Gastrocnemius medialis (tissue), 4 donors: ENCODE measurements at regions of chr1 and their contacts with region 1.

Region 1: DNA sequence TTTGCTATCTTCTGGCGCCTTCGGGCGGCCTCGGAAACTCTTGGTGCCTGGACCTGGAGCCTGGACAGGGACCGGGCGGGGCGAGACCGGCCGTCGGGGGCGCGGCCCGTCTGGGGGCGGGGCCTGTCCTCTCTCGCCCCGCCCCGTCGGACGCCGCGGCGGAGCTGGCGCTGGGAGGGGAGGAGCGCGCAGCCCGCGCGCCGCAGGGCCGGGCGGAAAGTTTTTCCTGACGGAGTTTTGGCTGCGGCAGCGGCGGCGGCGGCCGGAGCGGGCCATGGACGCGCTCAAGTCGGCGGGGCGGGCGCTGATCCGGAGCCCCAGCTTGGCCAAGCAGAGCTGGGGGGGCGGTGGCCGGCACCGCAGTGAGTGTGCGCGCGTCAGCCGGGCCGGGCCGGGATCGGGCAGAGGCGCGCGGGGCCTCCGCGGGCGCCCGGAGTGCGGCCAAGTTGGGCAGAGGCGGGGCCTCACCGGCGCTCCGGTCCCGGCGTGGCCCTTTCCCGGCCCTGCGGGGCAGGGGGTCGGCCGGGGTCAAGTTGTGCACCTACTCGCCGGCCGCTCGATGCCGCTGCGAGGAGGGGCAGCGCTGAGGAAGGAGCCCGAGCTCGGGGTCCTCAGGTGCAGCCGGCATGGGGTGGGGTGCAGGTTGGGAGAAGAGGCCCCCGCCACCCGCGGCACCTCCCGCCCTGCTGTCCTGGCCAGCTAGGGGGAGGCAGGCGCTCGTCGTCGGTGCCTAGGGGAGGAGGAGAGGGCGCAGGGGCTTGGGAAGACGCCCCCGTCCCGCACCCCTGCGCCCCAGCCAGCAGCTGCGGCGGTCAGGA is at the start of gene LDLRAP1:
- DNase-seq: peak; percentile 48 to 68
- ATAC-seq: peak; percentile 88
- H3K4me3 ChIP-seq: peak within 1 kb of the TSS; percentile 76 to 95 (median 89)
- H3K27ac ChIP-seq: peak within 1 kb of the TSS; percentile 82 to 97 (median 93)
- H3K4me1 ChIP-seq: peaks cover 25 to 29% of the 10 kb centered on the region in 2 donors
- H3K27me3 ChIP-seq: no peaks in the 10 kb centered on the region
- CTCF ChIP-seq: no peak
- POLR2A ChIP-seq: peak; percentile 98 to 99
- total RNA-seq, gene LDLRAP1: 10.0 to 17.9 (median 14.2) TPM

Region 2: GRCh38 chr1:25503551-25504426 is 39.8 kb before region 1 on chr1:
- in situ Hi-C with region 1: no loop called
- intact Hi-C with region 1: loop called (anchors 2 kb)
- DNase-seq: peak; percentile 51 to 71
- ATAC-seq: peak; percentile 85 to 86
- H3K4me3 ChIP-seq: no peak overlapping the region
- H3K27ac ChIP-seq: peak overlapping the region in 3 of 4 donors; percentile 16 to 51 (median 47)
- H3K4me1 ChIP-seq: peaks cover 12 to 13% of the 10 kb centered on the region in 2 donors
- H3K27me3 ChIP-seq: no peaks in the 10 kb centered on the region
- CTCF ChIP-seq: peak; percentile 60 to 80 (median 72)
- POLR2A ChIP-seq: no peak